H1 (cell line): ENCODE measurements at regions of chr4 and their contacts with region 1.

Region 1: DNA sequence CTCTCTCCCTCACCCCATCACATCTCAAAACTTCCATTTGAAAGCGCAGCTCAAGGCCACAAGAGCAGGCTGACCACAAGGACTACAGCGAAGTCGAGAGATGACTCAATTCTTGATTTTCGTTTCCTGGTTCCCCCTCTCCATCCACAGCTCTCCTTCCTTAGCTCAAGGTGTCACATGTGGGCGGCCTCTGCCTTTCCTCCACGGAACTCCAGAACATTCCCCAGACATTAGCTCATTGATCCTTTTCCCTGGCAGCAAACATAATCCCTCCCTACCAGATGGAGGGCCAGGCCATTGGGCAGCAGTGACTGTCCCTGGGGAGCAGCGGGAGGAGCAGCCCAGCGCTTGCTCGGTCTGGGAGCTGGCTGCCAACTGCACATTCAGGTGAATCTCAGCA is 56.3 kb downstream of the CCDC149 start:
- DNase-seq: no peak
- H3K4me3 ChIP-seq: no peak overlapping the region
- H3K27ac ChIP-seq: no peak overlapping the region
- H3K4me1 ChIP-seq: no peaks in the 10 kb centered on the region
- H3K27me3 ChIP-seq: no peaks in the 10 kb centered on the region
- CTCF ChIP-seq: no peak; a peak in 1 of 4 replicates
- EP300 ChIP-seq: no peak
- POLR2A ChIP-seq: no peak
- RAD21 ChIP-seq: no peak

Region 2: GRCh38 chr4:24867766-24868296 is 11.2 kb after region 1 on chr4:
- CTCF ChIA-PET with region 1: interaction called, 16 read pairs
- POLR2A ChIA-PET with region 1: interaction called, 4 read pairs
- DNase-seq: no peak
- H3K4me3 ChIP-seq: peak overlapping the region in 1 of 4 experiments; percentile 11; a peak in 1 of 8 replicates
- H3K27ac ChIP-seq: peak overlapping the region; percentile 42; the same call in 1 of the 2 replicates
- H3K4me1 ChIP-seq: peaks cover 7 to 18% (median 12%) of the 10 kb centered on the region in 4 experiments; a peak in 6 of 7 replicates
- H3K27me3 ChIP-seq: no peaks in the 10 kb centered on the region; a peak in 1 of 7 replicates
- CTCF ChIP-seq: no peak
- EP300 ChIP-seq: no peak; a peak in 1 of 3 replicates
- POLR2A ChIP-seq: no peak
- RAD21 ChIP-seq: no peak

Region 3: GRCh38 chr4:24999392-25000089 is 143.0 kb after region 1 on chr4:
- CTCF ChIA-PET with region 1: no interaction called
- POLR2A ChIA-PET with region 1: no interaction called
- DNase-seq: no peak
- H3K4me3 ChIP-seq: no peak overlapping the region
- H3K27ac ChIP-seq: no peak overlapping the region
- H3K4me1 ChIP-seq: peaks cover 0 to 9% (median 0%) of the 10 kb centered on the region in 4 experiments; a peak in 1 of 7 replicates
- H3K27me3 ChIP-seq: no peaks in the 10 kb centered on the region
- CTCF ChIP-seq: no peak
- EP300 ChIP-seq: no peak
- POLR2A ChIP-seq: no peak
- RAD21 ChIP-seq: no peak